GM13976 (cell line): ENCODE measurements at regions of chr20 and their contacts with region 1.

Region 1: GRCh38 chr20:40754339-40754943 is 65.4 kb upstream of the MAFB start:
- DNase-seq: no peak
- CTCF ChIP-seq: no peak

Region 2: GRCh38 chr20:41095110-41095969 is 340.9 kb after region 1 on chr20:
- in situ Hi-C with region 1: loop called (anchors 25 kb)
- DNase-seq: peak; percentile 55
- CTCF ChIP-seq: peak; percentile 66